Activated CD8-positive, alpha-beta memory T cell treated with anti-CD3 and anti-CD28 coated beads, Interleukin-2, amount 10 ng/mL, durations not matched to agents 7 days and 5 days (primary cell): ENCODE measurements at regions of chr15 and their contacts with region 1.

Region 1: DNA sequence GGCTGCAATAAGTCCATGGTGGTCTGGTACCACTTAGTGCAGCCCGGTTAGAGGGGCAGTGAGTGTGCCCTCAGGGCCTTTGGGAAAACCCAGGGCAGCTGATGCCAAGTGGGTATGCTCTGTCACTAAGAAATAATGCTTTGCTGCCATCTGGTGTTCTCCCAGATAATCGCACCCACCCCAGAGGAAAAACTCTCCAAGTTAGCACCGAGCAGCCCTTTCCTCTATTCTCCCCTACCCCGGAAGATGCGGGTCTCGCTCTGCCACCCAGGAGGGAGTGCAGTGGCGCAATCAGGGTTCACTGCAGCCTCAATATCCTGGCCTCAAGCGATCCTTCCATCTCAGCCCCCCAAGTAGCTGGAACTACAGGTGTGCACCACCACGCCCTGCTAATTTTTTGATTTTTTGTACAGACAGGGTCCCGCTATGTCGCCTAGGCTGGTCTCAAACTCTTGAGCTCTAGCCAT is 21.3 kb upstream of the DAPK2 start:
- DNase-seq: peak; percentile 79
- ATAC-seq: peak; percentile 87
- H3K4me3 Mint-ChIP-seq: no peak overlapping the region
- H3K27ac Mint-ChIP-seq: peak overlapping the region; percentile 57
- H3K4me1 Mint-ChIP-seq: peaks cover 23% of the 10 kb centered on the region
- H3K27me3 Mint-ChIP-seq: no peaks in the 10 kb centered on the region

Region 2: DNA sequence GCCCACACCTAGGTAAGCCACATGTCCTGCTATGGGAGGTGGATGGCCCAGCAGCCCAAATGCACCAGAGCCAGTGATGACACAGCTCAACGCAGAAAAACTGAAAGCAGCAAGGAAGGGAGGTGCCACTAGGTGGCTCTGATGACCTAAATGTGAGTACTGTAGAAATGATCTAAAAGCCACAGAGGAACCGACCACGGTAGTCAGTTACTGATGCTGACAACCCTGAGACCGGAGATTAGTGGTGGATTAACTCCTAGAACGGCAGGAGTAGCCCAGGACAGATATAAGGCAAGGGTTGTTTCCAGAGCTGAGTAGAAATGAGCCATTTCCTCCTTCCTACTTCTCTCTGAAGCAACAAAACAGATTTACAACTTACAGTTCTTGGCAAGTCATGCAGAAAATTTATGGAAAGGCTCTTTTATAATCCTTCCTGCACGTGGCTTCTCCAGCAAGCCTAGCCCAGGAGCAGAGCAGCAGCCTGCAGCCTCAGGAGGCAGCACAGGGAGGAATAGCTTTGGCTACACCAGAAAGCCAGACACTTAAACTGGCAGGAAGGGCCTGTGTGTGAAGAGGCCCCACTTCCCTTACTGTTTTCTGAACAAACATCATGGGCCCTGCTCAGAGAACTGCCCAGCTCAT is 457.3 kb before region 1 on chr15:
- CTCF ChIA-PET with region 1: interaction called, 151 read pairs
- DNase-seq: peak; percentile 92
- ATAC-seq: peak; percentile 89
- H3K4me3 Mint-ChIP-seq: peak overlapping the region; percentile 8
- H3K27ac Mint-ChIP-seq: peak overlapping the region; percentile 94
- H3K4me1 Mint-ChIP-seq: peaks cover 39% of the 10 kb centered on the region
- H3K27me3 Mint-ChIP-seq: no peaks in the 10 kb centered on the region

Region 3: GRCh38 chr15:64024172-64025050 is 43.2 kb before region 1 on chr15:
- CTCF ChIA-PET with region 1: no interaction called
- DNase-seq: no peak
- ATAC-seq: no peak
- H3K4me3 Mint-ChIP-seq: no peak overlapping the region
- H3K27ac Mint-ChIP-seq: no peak overlapping the region
- H3K4me1 Mint-ChIP-seq: peaks cover 37% of the 10 kb centered on the region
- H3K27me3 Mint-ChIP-seq: no peaks in the 10 kb centered on the region

Region 4: DNA sequence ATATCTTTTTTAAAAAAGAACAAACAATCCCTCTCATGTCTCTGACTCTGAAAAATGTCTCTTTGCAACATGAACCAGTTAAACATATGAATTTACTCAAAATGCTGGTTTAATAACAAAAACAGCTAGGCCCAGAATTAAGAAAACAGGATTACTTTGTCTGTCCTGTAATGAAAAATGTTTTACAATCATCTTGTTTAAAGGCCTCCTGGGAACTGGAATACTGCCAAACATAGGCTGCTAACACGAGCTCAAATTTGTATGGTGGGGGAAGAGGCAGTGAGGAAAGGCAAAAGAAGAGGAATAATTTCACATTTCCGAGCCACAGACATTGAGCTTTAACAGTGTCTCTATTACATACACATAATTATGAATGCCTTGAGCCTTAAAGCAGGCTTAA is 156.9 kb after region 1 on chr15:
- CTCF ChIA-PET with region 1: no interaction called
- DNase-seq: no peak
- ATAC-seq: no peak
- H3K4me3 Mint-ChIP-seq: no peak overlapping the region
- H3K27ac Mint-ChIP-seq: no peak overlapping the region
- H3K4me1 Mint-ChIP-seq: peaks cover 23% of the 10 kb centered on the region
- H3K27me3 Mint-ChIP-seq: no peaks in the 10 kb centered on the region